ENCODE measurements at regions of chr9 and their contacts with region 1.

Region 1: DNA sequence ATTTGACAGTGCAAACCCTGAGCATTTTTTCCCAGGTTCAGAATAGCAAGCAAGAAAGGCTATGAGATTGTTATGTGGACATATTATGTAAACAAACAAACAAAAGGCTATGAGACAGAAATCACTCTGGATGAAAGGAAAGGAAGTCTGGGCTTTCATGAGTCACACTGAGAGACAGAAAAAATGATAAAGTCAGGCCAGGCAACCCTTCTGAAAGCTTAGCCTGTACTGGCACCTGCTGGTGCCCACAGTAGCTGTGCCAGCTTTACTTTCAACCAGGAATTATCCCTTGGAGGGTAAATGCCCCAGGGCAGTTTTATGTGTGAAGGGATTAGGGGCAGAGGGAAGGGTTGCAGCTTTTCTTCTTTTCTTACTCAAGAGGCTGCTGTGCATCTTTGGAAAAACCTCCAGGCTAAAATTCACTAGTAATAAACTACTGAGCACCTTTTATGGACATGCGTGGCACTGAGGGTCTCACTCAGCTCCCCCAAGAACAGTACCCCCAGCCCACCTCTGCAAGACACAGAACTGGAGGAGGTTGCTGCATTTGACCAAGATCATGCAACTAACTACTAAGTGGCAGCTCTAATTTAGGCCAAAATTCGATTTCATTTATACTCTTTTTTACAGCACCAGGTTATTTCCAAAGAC is 41.7 kb downstream of the ACTL7B start:
- DNase-seq: peak; percentile 50
- H3K4me3 Mint-ChIP-seq: no peak overlapping the region
- H3K27ac Mint-ChIP-seq: no peak overlapping the region
- H3K4me1 Mint-ChIP-seq: no peaks in the 10 kb centered on the region
- H3K27me3 Mint-ChIP-seq: peaks cover 26% of the 10 kb centered on the region
- CTCF ChIP-seq: no peak

Region 2: GRCh38 chr9:108687006-108687987 is 126.8 kb before region 1 on chr9:
- CTCF ChIA-PET with region 1: no interaction called
- intact Hi-C with region 1: no loop called
- DNase-seq: peak; percentile 8
- H3K4me3 Mint-ChIP-seq: no peak overlapping the region
- H3K27ac Mint-ChIP-seq: no peak overlapping the region
- H3K4me1 Mint-ChIP-seq: peaks cover 9% of the 10 kb centered on the region
- H3K27me3 Mint-ChIP-seq: no peaks in the 10 kb centered on the region
- CTCF ChIP-seq: no peak

Region 3: DNA sequence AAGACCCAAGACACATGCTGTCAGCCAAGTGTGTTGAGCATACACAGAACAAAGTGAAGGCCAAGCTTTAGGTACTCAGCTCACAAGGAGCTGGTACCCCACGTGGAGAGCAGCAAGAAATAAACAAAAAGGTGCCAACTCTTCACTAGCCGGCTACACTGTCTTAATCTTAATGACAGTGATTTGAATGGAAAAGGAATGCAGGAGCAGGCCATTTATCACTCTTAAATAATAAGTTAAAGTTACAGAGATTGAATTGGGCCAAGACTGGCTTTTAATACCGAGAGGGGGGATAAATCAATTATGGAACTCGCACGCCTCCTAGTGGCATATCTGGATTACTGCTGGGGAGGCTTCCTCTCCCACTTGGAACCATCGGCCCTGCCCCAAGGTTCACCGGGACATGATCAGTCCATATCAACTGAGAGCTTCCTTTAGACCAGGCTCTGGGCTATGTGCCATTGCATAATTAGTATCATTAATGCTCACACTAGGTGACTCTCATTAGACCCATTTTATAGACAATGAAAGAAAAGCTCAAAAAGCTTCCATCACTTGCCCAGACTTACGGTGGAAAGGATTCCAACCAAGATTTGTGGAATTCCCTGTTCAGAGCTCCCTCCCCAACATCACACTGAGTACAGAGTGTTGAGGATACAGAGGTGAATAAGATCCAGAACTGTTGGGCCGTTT is 52.3 kb before region 1 on chr9:
- CTCF ChIA-PET with region 1: no interaction called
- intact Hi-C with region 1: no loop called
- DNase-seq: peak; percentile 49
- H3K4me3 Mint-ChIP-seq: no peak overlapping the region
- H3K27ac Mint-ChIP-seq: no peak overlapping the region
- H3K4me1 Mint-ChIP-seq: no peaks in the 10 kb centered on the region
- H3K27me3 Mint-ChIP-seq: peaks cover 30% of the 10 kb centered on the region
- CTCF ChIP-seq: peak; percentile 70

Region 4: GRCh38 chr9:108776920-108777645 is 37.0 kb before region 1 on chr9:
- CTCF ChIA-PET with region 1: interaction called, 6 read pairs
- intact Hi-C with region 1: loop called (anchors 1 kb)
- DNase-seq: peak; percentile 63
- H3K4me3 Mint-ChIP-seq: no peak overlapping the region
- H3K27ac Mint-ChIP-seq: peak overlapping the region; percentile 54
- H3K4me1 Mint-ChIP-seq: peaks cover 39% of the 10 kb centered on the region
- H3K27me3 Mint-ChIP-seq: peaks cover 24% of the 10 kb centered on the region
- CTCF ChIP-seq: no peak

Measured in Calu3 (cell line).